Cardiac septum (tissue), 1 donor: ENCODE measurements at regions of chr17 and their contacts with region 1.

Region 1: GRCh38 chr17:27879987-27880608 is 13.1 kb downstream of the LYRM9 start:
- DNase-seq: peak; percentile 80

Region 2: DNA sequence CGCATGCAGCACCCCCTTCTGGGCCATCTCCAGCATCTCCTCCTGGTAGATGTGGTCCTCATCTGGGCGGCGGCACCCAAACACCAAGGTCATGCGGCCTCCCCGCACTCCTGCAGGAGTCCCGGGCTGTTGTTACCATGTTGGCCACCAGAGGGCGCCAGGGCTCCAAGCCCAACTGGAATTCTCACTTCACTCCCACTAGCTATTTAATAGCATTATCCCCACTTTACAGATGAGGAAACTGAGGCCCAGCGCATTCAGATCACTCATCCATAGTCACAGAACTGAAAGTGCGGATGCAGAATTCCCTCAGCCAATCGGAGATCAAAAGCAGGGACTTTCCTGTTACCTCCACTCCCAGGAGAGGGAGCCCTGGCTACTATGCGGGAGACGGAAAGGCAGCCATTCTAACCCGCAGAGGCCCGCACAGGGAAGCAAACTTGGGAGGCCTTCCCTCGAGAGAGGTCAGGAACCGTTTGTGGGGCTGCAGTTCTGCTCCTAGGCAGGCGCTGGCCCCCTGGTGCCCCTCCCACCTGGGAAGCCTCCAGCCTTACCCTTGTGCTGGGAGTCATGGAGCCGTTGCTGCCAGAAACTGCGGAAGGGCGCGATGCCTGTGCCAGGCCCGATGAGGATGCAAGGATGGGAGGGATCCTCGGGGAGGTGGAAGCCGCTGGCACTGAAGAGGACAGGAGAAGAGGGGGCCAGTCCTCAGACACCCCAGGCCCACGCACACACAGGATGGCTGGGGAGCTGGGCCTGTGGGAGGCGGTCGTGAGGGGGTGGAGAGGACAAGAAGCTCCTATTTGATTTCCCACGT is 119.8 kb before region 1 on chr17:
- intact Hi-C with region 1: loop called (anchors 2 kb)
- DNase-seq: peak; percentile 84